Activated CD4-positive, alpha-beta T cell treated with anti-CD3 and anti-CD28 coated beads, Interleukin-2, amount 10 ng/mL, durations not matched to agents 24 days and 14 days (primary cell): ENCODE measurements at regions of chr4 and their contacts with region 1.

Region 1: DNA sequence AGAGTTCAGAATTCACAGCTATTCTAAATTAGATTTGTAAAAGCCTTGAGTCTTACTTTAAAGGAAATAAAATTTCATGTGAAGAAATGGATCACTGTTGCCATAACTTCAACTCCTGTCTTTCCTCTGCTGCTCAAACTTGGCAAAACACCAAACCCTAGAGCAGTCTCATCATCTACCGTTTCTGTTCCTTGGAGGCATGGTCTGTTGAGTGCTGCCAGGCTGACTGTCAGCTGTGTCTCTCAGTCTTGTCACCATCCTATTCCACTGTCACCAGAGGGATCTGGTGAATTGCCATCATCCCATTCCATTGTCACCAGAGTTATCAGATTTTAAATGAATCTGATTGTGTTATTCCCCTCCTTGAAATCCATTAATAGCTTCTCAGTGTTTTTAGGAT is 55.6 kb downstream of the STIM2 start:
- DNase-seq: no peak
- H3K4me3 Mint-ChIP-seq: no peak overlapping the region
- H3K27ac Mint-ChIP-seq: no peak overlapping the region
- H3K4me1 Mint-ChIP-seq: peaks cover 36% of the 10 kb centered on the region
- H3K27me3 Mint-ChIP-seq: no peaks in the 10 kb centered on the region

Region 2: GRCh38 chr4:26959654-26960047 is 43.5 kb after region 1 on chr4:
- intact Hi-C with region 1: loop called (anchors 5 kb)
- DNase-seq: no peak
- H3K4me3 Mint-ChIP-seq: peak overlapping the region; percentile 20
- H3K27ac Mint-ChIP-seq: peak overlapping the region; percentile 71
- H3K4me1 Mint-ChIP-seq: peaks cover 33% of the 10 kb centered on the region
- H3K27me3 Mint-ChIP-seq: no peaks in the 10 kb centered on the region